ENCODE measurements at regions of chr10 and their contacts with region 1.

Region 1: GRCh38 chr10:32190890-32191491 is 134.8 kb upstream of the KIF5B start:
- DNase-seq: no peak
- H3K4me3 ChIP-seq: no peak overlapping the region
- H3K27ac ChIP-seq: peak overlapping the region in 1 of 2 experiments; percentile 39; a peak in 1 of 4 replicates
- H3K4me1 ChIP-seq: peaks cover 0 to 9% of the 10 kb centered on the region in 2 experiments; a peak in 1 of 4 replicates
- H3K27me3 ChIP-seq: no peaks in the 10 kb centered on the region
- CTCF ChIP-seq: peak; percentile 83
- EP300 ChIP-seq: no peak
- RAD21 ChIP-seq: peak; percentile 72

Region 2: GRCh38 chr10:32095116-32095733 is 95.8 kb before region 1 on chr10:
- CTCF ChIA-PET with region 1: no interaction called
- POLR2A ChIA-PET with region 1: no interaction called
- DNase-seq: no peak
- H3K4me3 ChIP-seq: no peak overlapping the region
- H3K27ac ChIP-seq: no peak overlapping the region
- H3K4me1 ChIP-seq: no peaks in the 10 kb centered on the region
- H3K27me3 ChIP-seq: no peaks in the 10 kb centered on the region
- CTCF ChIP-seq: no peak
- EP300 ChIP-seq: no peak
- RAD21 ChIP-seq: no peak

Region 3: DNA sequence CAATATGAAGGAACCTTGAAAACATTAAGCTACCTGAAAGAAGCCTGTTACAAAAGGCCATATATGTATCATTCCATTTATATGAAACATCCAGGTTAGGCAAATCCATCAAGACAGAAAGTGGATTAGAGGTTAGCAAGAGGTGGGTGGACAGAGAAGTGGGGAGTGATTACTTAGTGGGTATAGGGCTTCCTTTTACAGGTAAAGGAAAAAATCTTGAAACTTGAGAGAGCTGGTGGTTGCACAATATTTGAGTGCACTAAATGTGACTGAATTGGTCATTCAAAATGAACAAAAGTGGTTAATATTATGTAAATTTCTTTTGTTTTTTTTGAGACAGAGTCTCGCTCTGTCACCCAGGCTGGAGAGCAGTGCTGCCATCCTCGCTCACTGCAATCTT is 15.4 kb before region 1 on chr10:
- CTCF ChIA-PET with region 1: interaction called, 11 read pairs
- POLR2A ChIA-PET with region 1: no interaction called
- DNase-seq: no peak
- H3K4me3 ChIP-seq: no peak overlapping the region
- H3K27ac ChIP-seq: no peak overlapping the region
- H3K4me1 ChIP-seq: no peaks in the 10 kb centered on the region
- H3K27me3 ChIP-seq: no peaks in the 10 kb centered on the region; the same call in 1 of the 2 replicates
- CTCF ChIP-seq: no peak
- EP300 ChIP-seq: no peak
- RAD21 ChIP-seq: no peak

Region 4: DNA sequence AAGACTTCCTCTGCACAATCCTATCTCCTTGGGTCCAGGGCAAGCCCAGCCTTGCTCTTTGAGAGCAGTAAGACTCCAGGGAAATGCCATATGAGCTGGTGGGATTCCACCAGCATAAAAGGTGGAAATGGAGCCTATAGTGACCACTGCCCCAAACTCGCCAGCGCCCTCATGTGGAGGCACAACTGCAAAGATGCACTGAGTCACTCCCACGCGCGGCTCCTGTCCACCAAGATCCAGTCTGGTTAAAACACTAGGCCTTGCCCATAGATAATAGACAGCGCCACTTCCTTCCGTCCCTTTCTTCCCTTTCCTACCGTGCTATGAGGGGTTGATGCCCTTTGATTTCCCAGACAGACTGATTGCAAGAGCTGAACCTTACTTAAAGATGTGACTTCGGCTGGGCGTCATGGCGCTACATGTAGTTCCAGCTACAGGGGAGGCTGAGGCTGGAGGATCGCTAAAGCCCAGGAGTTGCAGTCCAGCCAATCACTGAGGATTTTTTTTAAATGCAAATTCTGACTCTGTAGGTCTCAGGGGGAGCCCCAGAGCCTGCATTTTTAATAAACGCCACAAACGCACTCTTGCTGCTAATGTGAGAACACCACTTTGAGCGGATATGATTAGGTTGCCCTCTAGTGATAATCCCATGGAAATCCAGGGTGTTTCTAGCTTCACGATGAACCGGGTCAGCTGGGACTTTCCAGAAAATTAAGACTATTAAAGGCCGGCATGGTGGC is 19.5 kb after region 1 on chr10:
- CTCF ChIA-PET with region 1: interaction called, 10 read pairs
- POLR2A ChIA-PET with region 1: no interaction called
- DNase-seq: peak; percentile 58
- H3K4me3 ChIP-seq: no peak overlapping the region
- H3K27ac ChIP-seq: no peak overlapping the region
- H3K4me1 ChIP-seq: no peaks in the 10 kb centered on the region; a peak in 1 of 4 replicates
- H3K27me3 ChIP-seq: no peaks in the 10 kb centered on the region
- CTCF ChIP-seq: peak; percentile 60
- EP300 ChIP-seq: no peak
- RAD21 ChIP-seq: peak; percentile 70

Region 5: DNA sequence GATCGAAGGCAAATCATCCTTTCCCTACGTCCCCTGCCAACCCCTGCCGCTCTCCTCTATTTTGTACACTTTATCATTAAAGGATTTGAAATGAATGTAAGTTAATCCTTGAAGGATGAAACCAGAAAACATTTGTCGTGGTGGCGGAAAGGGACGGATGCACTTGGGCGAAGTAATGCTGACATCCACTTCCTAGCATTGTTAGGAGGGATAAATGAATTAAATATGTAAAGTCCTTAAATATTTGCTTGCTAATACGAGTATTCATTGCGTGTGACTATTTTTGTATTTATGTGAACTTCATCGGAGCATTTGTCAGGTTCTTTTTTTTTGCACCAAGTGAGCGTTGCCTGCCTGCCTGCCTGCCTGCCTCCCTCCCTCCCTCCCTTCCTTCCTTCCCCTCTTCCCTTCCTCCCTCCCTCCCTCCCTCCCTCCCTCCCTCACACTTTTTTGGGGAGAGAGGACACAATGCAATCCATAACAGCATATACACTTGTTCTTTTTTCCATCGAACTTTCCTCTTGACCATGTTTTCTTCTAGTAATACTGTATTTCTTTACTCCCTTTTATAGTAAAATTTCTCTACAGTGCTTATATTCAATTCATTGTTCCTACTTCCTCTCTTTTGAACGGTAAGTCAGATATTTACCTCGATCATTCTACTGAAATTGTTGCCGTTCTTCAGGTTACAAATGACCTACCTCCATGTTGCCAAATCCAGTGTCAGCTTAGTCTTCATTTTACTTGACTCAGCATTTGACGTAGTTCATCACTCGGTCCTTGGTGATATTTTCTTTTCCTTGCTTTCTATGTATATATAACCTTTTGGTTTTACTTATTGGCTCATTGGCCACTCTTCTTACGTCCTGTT is 255.8 kb after region 1 on chr10:
- CTCF ChIA-PET with region 1: no interaction called
- POLR2A ChIA-PET with region 1: no interaction called
- DNase-seq: peak; percentile 35
- H3K4me3 ChIP-seq: peak overlapping the region; percentile 80 to 85
- H3K27ac ChIP-seq: peak overlapping the region; percentile 94 to 98
- H3K4me1 ChIP-seq: no peaks in the 10 kb centered on the region; a peak in 1 of 4 replicates
- H3K27me3 ChIP-seq: no peaks in the 10 kb centered on the region
- CTCF ChIP-seq: no peak
- EP300 ChIP-seq: no peak
- RAD21 ChIP-seq: no peak

Region 6: GRCh38 chr10:32516567-32517495 is 325.8 kb after region 1 on chr10:
- CTCF ChIA-PET with region 1: no interaction called
- POLR2A ChIA-PET with region 1: no interaction called
- DNase-seq: no peak
- H3K4me3 ChIP-seq: no peak overlapping the region
- H3K27ac ChIP-seq: no peak overlapping the region
- H3K4me1 ChIP-seq: no peaks in the 10 kb centered on the region
- H3K27me3 ChIP-seq: no peaks in the 10 kb centered on the region
- CTCF ChIP-seq: no peak
- EP300 ChIP-seq: no peak
- RAD21 ChIP-seq: no peak

Measured in SK-N-SH (cell line).